ENCODE measurements at regions of chr17 and their contacts with region 1.

Region 1: GRCh38 chr17:8118769-8119580 is 661 bp upstream of the ALOXE3 start:
- DNase-seq: peak; percentile 90 to 94
- ATAC-seq: peak; percentile 78 to 82 (median 79)
- H3K4me3 ChIP-seq: peak overlapping the region; percentile 77
- H3K27ac ChIP-seq: peak overlapping the region; percentile 71
- H3K4me1 ChIP-seq: peaks cover 24% of the 10 kb centered on the region
- H3K27me3 ChIP-seq: peaks cover 0 to 46% (median 12%) of the 10 kb centered on the region in 3 donors
- CTCF ChIP-seq: peak; percentile 88

Region 2: GRCh38 chr17:7794075-7794663 is 324.8 kb before region 1 on chr17:
- intact Hi-C with region 1: no loop called
- DNase-seq: no peak
- ATAC-seq: no peak
- H3K4me3 ChIP-seq: no peak overlapping the region
- H3K27ac ChIP-seq: no peak overlapping the region
- H3K4me1 ChIP-seq: no peaks in the 10 kb centered on the region
- H3K27me3 ChIP-seq: peaks cover 0 to 6% (median 0%) of the 10 kb centered on the region in 3 donors
- CTCF ChIP-seq: no peak

Region 3: DNA sequence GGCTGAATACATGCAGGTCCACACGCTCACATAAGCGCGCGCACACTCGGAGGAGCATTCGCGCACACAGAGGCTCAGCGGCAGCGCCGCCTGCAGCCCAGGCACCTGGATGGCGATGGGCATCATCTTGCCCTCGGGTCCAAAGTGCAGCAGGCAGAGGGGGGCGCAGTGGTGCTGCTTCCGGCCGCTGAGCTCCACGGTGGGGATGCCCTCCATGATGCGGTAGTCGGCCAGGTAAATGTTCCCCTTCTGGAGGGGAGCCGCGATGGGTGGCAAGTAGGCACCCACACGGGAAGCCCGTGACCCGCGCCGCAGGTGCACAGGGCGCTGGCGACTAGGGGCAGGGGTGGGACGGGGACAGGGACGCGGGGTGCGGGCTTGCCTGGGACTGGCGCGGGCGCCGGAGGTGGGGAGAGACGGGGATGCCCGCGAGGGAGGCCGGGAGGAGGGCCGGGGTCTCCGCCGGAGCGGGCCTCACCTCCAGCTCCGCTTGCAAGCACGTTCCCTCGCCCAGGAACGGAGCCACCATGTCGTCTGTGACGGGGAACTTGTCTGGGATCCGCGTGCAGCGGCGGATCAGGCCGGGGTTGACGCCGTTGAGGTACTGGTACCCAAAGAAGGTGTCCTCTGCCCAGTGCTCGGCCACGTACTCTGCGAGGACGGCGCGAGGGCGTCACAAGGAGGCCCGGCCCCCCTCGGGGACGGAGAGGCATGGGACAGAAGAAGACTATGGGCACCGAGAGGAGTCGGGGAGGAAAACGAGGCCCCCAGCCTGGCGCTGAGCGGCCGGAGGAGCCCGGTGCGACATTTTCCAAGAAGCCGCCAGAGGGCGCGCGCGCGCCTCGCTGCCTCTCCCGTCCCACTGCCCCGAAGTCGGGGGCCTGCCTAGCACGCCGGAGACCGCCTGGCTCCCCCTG is 39.4 kb before region 1 on chr17:
- intact Hi-C with region 1: loop called (anchors 1 to 5 kb)
- DNase-seq: peak; percentile 75 to 86
- ATAC-seq: peak; percentile 86 to 98 (median 90)
- H3K4me3 ChIP-seq: peak overlapping the region; percentile 62
- H3K27ac ChIP-seq: no peak overlapping the region
- H3K4me1 ChIP-seq: peaks cover 9% of the 10 kb centered on the region
- H3K27me3 ChIP-seq: peaks cover 0 to 62% (median 13%) of the 10 kb centered on the region in 3 donors
- CTCF ChIP-seq: peak; percentile 86

Region 4: GRCh38 chr17:8138672-8139371 is 19.8 kb after region 1 on chr17:
- intact Hi-C with region 1: loop called in 1 of 2 experiments (anchors 2 kb)
- DNase-seq: peak; percentile 91 to 97
- ATAC-seq: peak; percentile 81 to 87 (median 82)
- H3K4me3 ChIP-seq: peak overlapping the region; percentile 48
- H3K27ac ChIP-seq: peak overlapping the region; percentile 93
- H3K4me1 ChIP-seq: peaks cover 33% of the 10 kb centered on the region
- H3K27me3 ChIP-seq: no peaks in the 10 kb centered on the region
- CTCF ChIP-seq: peak; percentile 91

Region 5: DNA sequence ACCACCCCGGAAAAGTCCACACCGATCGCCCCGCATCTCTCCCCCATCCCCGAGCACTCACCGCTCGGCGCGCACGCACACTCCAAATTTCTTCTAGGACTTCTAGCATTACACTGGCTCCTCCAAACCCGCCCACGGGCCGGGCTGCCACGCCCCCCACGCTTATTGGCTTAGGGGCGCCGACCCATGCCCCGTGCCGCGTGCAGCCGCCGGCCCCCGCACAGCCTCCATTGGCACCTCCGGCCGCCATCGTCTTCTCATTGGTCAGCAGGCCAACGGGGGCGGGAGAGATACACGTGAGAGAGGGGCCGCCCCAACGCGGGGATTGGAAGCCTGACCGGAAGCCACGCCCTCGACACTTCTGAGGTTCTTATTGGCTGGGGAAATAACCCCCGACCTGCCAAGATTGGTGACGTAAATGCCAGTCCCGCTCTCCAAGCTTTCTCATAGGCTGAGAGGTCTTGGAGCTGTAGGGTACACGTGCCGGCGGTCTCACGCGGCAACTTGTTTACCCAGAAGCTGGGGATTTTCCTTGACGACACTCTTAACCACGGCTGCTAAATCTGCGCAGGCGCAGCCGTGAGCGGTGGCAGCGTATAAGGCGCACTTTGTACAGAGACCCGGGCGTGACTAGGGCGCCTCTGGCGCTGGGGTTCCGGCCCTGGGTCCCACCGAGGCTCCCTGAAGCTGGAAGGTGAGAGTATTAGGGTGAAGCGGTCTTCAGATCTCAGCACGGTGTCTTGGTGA is 37.4 kb after region 1 on chr17:
- intact Hi-C with region 1: loop called in 1 of 2 experiments (anchors 2 kb)
- DNase-seq: peak; percentile 100
- ATAC-seq: peak; percentile 59 to 68 (median 64)
- H3K4me3 ChIP-seq: peak overlapping the region; percentile 97
- H3K27ac ChIP-seq: peak overlapping the region; percentile 100
- H3K4me1 ChIP-seq: peaks cover 31% of the 10 kb centered on the region
- H3K27me3 ChIP-seq: no peaks in the 10 kb centered on the region
- CTCF ChIP-seq: no peak

Region 6: DNA sequence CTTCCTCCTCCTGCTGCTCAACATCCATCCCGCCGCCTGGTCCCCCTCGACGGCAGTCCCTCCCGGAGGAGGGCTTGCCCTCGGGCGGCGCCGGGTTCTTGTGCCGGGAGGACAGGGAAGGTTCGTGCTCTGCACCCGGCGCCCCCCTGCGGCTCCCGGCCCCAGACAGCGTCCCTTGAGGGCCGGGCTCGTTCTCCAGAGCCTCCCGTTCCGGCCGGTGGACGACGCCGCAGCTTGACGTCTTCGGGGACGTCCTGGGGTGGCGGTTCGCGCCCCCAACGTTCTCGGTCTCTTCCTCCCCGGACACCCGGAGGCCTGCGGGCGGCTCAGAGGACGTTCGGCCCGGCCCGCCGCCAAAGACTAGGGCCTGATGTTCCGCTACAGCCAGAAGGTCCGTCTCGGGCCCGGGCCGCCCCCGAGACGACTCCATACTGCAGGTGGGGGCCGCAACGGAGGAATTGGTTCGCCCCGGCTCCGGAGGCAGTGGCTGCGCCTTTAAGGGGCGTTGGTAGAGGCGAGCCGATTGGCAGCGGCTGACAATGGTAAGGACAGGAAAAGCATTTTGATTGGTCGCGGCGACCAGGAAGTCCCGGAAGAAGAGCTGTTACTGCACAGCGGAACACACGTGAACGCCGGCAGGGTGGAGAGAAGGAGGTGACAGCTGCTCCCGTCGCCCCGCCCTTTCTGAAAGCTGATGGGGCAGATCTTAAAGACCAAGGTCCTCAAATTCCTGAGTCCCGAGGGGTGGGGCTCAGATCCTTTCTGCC is 70.9 kb after region 1 on chr17 and contains the start of gene BORCS6:
- intact Hi-C with region 1: loop called (anchors 2 kb)
- DNase-seq: peak; percentile 97 to 99
- ATAC-seq: peak; percentile 72 to 75 (median 74)
- H3K4me3 ChIP-seq: peak within 1 kb of the TSS; percentile 93
- H3K27ac ChIP-seq: peak within 1 kb of the TSS; percentile 96
- H3K4me1 ChIP-seq: peaks cover 22% of the 10 kb centered on the region
- H3K27me3 ChIP-seq: no peaks in the 10 kb centered on the region
- CTCF ChIP-seq: no peak
- total RNA-seq, gene BORCS6: 8.8 to 11.2 (median 9.7) TPM

Region 7: GRCh38 chr17:8248751-8249607 is 130.0 kb after region 1 on chr17 and contains the start of gene PFAS:
- intact Hi-C with region 1: no loop called
- DNase-seq: peak; percentile 97 to 98
- ATAC-seq: peak; percentile 84 to 89 (median 85)
- H3K4me3 ChIP-seq: peak within 1 kb of the TSS; percentile 88
- H3K27ac ChIP-seq: peak within 1 kb of the TSS; percentile 98
- H3K4me1 ChIP-seq: peaks cover 8% of the 10 kb centered on the region
- H3K27me3 ChIP-seq: no peaks in the 10 kb centered on the region
- CTCF ChIP-seq: no peak
- total RNA-seq, gene PFAS: 10.7 to 15.6 (median 13.3) TPM

Region 8: DNA sequence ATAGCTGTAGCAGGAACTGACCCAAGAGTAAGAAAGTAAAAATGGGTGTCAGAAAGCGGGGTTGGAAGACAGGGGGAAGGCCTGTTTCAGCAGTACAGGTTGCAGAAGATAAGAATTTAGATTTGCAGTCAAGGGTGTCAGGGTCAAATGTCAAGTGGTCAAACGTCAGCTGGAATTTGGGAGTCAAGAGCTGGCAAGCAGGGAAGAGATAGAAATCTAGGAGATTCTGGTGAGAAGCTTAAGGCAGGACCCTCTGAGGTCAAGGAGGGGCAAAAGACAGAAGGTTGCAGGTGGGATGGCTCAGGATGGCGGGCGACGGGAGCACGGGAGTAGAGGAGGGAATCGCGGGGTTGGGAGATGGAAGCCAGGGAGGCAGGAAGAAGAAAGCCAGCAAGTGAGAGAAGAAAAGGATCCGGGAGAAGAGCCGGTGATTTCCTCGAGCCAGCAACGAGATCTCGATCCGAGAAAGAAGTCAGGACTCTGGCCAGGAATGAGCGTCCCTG is 175.9 kb after region 1 on chr17:
- intact Hi-C with region 1: loop called in 1 of 2 experiments (anchors 10 kb)
- DNase-seq: no peak
- ATAC-seq: peak; percentile 4 to 21 (median 8)
- H3K4me3 ChIP-seq: peak overlapping the region; percentile 82
- H3K27ac ChIP-seq: peak overlapping the region; percentile 90
- H3K4me1 ChIP-seq: peaks cover 8% of the 10 kb centered on the region
- H3K27me3 ChIP-seq: no peaks in the 10 kb centered on the region
- CTCF ChIP-seq: no peak

Region 9: DNA sequence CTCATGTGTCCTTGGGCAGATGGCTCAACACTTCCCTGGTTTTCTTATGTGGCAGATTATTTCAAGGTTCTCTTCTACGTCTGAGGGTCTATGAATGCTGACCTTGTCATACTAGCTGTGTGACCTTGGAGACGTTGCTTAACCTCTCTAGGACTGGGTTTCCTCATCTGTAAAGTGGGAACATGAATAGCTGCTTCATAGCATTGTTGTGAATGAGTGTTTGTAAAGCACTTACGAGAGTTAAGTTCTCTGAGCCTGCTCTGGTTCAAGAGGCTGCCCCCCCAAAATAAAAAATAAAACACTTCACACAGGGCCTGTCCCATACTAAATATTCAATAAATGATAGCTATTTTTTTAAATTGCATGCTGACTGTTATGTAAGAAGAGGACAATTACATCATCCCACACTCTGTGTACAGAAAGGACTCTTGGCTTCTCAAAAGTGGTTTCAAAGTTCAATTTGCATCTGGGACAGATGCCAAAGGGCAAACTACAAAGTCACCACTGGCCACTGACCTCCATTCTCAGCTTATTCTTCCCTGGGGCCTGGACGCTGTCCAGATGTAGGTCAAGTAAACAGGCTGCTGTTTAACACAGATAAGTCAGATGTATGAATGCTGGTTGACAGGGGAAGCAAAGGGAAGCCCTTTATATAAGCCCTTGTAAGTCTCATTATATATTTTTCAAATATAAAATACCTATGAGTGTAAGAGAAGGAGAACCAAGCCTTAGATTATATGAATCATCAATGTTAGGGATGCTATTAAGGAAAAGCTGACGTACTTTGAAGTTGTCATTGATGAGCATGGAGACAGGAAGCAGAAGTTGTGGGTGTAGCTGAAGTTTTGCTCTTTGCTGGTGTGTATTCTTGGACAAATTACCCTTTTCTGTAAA is 301.3 kb after region 1 on chr17:
- intact Hi-C with region 1: no loop called
- DNase-seq: peak in 1 of 2 donors; percentile 36
- ATAC-seq: peak in 1 of 4 donors; percentile 21
- H3K4me3 ChIP-seq: no peak overlapping the region
- H3K27ac ChIP-seq: no peak overlapping the region
- H3K4me1 ChIP-seq: no peaks in the 10 kb centered on the region
- H3K27me3 ChIP-seq: peaks cover 0 to 28% (median 2%) of the 10 kb centered on the region in 3 donors
- CTCF ChIP-seq: no peak

Measured in psoas muscle (tissue), 8 donors.